ENCODE measurements at regions of chr6 and their contacts with region 1.

Region 1: GRCh38 chr6:44642870-44643529 is 255.5 kb downstream of the CDC5L start:
- DNase-seq: no peak
- ATAC-seq: no peak
- H3K4me3 ChIP-seq: no peak overlapping the region
- H3K27ac ChIP-seq: no peak overlapping the region
- H3K4me1 ChIP-seq: no peaks in the 10 kb centered on the region
- H3K27me3 ChIP-seq: no peaks in the 10 kb centered on the region
- CTCF ChIP-seq: no peak
- POLR2A ChIP-seq: no peak

Region 2: GRCh38 chr6:44489910-44490604 is 152.9 kb before region 1 on chr6:
- in situ Hi-C with region 1: loop called in 2 of 4 experiments (anchors 10 to 25 kb)
- intact Hi-C with region 1: no loop called
- DNase-seq: peak; percentile 36 to 38
- ATAC-seq: peak; percentile 98 to 99
- H3K4me3 ChIP-seq: no peak overlapping the region
- H3K27ac ChIP-seq: peak overlapping the region; percentile 52 to 63 (median 58)
- H3K4me1 ChIP-seq: peaks cover 0 to 5% of the 10 kb centered on the region in 2 donors
- H3K27me3 ChIP-seq: no peaks in the 10 kb centered on the region
- CTCF ChIP-seq: no peak
- POLR2A ChIP-seq: no peak

Region 3: DNA sequence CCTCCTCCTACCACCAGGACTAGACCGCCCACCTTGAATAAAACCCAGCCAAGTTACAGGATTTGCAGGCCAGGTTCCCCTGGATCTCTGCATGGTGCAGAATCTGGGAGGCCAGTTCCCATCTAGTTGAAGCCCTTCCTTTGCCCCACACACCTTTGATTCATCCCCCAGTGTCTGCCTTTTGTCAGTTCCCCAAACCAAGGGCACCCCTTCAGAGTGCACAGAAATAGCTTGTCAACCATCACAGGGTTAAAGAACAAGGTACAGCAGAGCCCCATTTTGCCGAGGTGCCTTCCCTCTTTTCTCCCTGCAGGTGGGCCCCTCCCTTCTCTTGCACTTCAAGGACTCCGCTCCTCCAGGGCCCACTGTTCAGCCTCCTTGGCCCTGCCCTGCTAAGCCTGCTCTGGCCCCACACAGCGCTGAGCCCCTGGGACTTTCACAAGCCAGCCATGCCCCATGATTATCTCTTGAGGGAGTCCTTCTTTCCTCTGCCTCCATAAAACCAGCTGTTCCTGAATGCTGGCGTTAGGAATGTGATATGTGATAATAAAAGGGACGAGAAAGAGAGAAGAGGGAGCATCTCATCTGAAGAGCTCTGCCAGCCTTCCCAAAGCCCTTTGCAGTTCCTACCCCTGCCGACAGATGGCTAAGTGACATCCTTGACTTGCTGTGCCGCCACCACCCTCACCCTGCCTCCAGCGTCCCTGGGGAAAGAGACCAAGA is 24.8 kb after region 1 on chr6:
- in situ Hi-C with region 1: no loop called
- intact Hi-C with region 1: no loop called
- DNase-seq: no peak
- ATAC-seq: no peak
- H3K4me3 ChIP-seq: no peak overlapping the region
- H3K27ac ChIP-seq: no peak overlapping the region
- H3K4me1 ChIP-seq: no peaks in the 10 kb centered on the region
- H3K27me3 ChIP-seq: no peaks in the 10 kb centered on the region
- CTCF ChIP-seq: peak in 3 of 5 experiments; percentile 25 to 49 (median 30)
- POLR2A ChIP-seq: no peak

Region 4: DNA sequence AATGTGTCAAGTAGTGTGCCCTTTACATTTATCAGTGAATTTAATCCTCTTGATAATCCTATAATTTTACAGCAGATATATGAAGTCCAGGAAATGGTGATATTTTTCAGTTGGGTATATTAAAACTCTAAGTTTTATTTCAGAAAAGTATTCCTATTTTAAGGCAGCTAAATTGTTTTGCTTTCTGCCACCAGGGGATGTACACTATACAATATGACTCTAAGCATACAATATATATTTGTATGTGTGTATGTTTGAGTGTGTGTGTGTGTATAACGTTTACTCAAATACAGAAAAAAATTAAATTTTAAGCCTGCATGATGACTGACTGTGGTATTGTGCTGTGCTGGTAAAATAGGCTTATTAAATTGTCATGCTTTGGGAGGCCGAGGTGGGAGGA is 583.1 kb after region 1 on chr6:
- in situ Hi-C with region 1: no loop called
- intact Hi-C with region 1: loop called (anchors 5 kb)
- DNase-seq: no peak
- ATAC-seq: no peak
- H3K4me3 ChIP-seq: no peak overlapping the region
- H3K27ac ChIP-seq: no peak overlapping the region
- H3K4me1 ChIP-seq: no peaks in the 10 kb centered on the region
- H3K27me3 ChIP-seq: no peaks in the 10 kb centered on the region
- CTCF ChIP-seq: no peak
- POLR2A ChIP-seq: no peak

Measured in gastrocnemius medialis (tissue), 4 donors.